ENCODE measurements at regions of chr10 and their contacts with region 1.

Region 1: DNA sequence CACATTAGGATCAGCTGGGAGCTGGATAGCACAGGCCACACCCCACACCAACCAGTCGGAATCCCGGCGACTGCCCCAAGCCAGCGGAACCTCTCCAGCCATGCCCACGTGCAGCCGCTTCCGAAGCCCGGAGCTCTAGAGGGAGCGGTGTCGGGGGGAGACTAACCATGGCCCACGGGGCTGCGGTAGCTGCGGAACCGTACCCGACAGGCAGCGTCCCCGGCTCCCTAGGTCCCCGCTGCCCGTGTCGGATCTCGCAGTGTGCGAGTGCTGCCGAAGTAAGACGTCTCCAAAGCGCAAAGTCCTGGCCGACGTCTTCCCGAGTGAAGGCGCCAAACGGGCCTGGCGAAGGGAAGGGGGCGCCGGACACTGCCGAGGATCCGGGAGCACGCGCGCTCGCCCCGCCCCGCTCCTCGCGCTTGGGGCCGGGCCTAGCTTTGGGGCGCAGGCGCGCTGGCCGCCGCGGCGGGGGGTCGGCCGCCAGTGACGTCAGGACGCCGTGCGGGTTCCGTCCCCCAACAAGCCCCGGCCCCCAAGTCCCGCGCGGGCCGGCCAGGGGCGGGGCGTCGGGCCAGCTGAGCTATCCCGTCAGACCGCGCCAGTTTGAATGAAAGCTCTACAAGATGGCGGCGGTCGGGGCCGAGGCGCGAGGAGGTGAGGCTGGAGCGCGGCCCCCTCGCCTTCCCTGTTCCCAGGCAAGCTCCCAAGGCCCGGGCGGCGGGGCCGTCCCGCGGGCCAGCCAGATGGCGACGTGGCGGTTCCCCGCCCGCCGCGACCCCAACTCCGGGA is at the start of gene SUV39H2:
- DNase-seq: peak; percentile 94
- H3K4me3 Mint-ChIP-seq: peak within 1 kb of the TSS; percentile 94
- H3K27ac Mint-ChIP-seq: peak within 1 kb of the TSS; percentile 81
- H3K4me1 Mint-ChIP-seq: peaks cover 28% of the 10 kb centered on the region
- H3K27me3 Mint-ChIP-seq: no peaks in the 10 kb centered on the region
- total RNA-seq, gene SUV39H2: 35.8 to 38.2 TPM

Region 2: DNA sequence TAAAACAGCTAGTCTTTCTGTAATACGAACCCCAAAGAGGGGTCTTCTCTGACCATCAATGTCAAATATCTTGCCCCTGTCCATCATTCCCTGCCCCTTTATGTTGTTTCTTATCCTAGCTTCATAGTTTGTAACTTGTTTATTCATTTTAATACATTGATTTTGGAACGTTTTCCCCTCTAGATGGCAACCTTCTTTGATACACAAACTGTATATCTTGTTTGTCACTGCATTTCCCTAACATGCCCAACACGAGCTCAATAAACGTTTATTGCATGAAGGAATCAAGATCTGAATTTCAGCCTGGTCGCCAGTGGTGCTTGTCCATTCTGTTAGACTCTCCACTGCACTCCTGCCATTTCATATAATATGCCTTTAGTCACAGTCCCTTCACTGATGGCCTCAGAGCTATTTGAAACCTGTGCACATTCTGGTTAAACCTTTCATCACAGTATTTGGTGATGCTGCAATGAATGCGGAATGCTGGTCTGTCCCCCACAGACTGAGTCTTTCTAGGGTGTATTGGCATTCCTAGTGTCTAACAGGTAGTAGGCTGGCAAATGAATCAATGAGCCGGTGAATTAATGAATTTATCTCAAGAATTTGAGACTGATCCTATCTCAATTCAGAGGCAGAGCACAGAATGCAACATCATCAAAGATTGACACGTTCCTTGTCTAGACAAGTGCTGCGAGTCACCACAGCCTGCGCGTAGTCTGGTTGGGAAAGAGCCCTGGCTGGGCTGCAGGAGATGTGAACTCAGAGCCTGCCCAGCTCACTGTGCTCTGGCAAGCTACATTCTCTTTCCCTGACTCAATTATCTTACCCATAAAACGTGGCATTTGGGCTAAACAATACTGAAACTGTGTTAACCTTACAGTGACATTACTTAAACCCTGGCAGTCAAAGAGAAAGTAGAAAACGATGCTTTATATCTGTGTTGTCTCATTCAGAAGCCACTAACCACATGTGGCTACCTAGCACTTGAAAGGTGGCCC is 492.6 kb before region 1 on chr10:
- CTCF ChIA-PET with region 1: no interaction called
- intact Hi-C with region 1: loop called (anchors 5 kb)
- DNase-seq: peak; percentile 67
- H3K4me3 Mint-ChIP-seq: no peak overlapping the region
- H3K27ac Mint-ChIP-seq: no peak overlapping the region
- H3K4me1 Mint-ChIP-seq: peaks cover 80% of the 10 kb centered on the region
- H3K27me3 Mint-ChIP-seq: peaks cover 3% of the 10 kb centered on the region

Region 3: GRCh38 chr10:14751014-14751896 is 127.2 kb before region 1 on chr10:
- CTCF ChIA-PET with region 1: no interaction called
- intact Hi-C with region 1: no loop called
- DNase-seq: no peak
- H3K4me3 Mint-ChIP-seq: no peak overlapping the region
- H3K27ac Mint-ChIP-seq: no peak overlapping the region
- H3K4me1 Mint-ChIP-seq: peaks cover 2% of the 10 kb centered on the region
- H3K27me3 Mint-ChIP-seq: no peaks in the 10 kb centered on the region

Region 4: DNA sequence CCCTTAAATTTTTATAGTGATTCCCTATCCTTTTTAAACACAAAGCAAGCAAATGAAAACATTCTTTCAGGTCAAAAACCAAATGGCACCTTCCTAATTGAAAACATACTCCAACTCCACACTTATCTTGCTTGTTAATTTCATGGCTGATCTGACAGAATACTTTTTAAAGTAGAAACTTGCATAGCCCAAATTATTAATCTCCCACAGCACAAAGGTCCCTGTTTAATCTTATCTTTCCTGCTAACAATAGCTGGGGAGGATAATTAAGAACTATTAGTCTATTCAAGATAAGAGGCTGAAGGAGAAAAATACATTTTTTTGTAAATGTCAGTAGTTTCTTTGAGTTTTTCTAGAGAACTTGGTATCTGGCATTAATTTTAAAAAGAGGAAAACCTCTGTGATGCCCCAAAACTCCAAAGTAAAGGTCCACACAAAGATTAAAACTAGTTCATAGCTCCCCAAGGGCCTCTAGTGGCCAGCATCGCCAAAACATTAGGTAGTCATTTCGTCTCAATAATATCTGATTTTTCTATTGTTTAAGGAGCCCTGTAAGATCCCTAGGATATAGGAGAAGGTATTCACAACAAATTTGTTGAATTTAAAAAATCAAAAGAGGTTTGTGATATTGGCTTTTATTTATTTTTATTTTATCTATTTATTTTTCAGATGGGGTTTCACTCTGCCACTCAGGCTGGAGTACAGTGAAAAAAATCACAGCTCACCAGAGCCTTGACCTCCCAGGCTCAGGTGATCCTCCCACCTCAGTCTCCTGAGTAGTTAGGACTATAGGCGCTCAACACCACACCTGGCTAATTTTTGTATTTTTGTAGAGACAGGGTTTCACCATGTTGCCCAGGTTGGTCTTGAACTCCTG is 55.3 kb before region 1 on chr10:
- CTCF ChIA-PET with region 1: no interaction called
- intact Hi-C with region 1: no loop called
- DNase-seq: peak; percentile 64
- H3K4me3 Mint-ChIP-seq: no peak overlapping the region
- H3K27ac Mint-ChIP-seq: no peak overlapping the region
- H3K4me1 Mint-ChIP-seq: peaks cover 3% of the 10 kb centered on the region
- H3K27me3 Mint-ChIP-seq: no peaks in the 10 kb centered on the region

Region 5: GRCh38 chr10:14837757-14838581 is 40.5 kb before region 1 on chr10 and contains the starts of genes CDNF, HSPA14 and MSANTD7:
- CTCF ChIA-PET with region 1: interaction called, 3 read pairs
- intact Hi-C with region 1: loop called (anchors 1 kb)
- DNase-seq: peak; percentile 99
- H3K4me3 Mint-ChIP-seq: peak within 1 kb of the TSS; percentile 92
- H3K27ac Mint-ChIP-seq: peak within 1 kb of the TSS; percentile 93
- H3K4me1 Mint-ChIP-seq: peaks cover 22% of the 10 kb centered on the region
- H3K27me3 Mint-ChIP-seq: no peaks in the 10 kb centered on the region
- total RNA-seq, gene CDNF: 1.6 to 1.8 TPM
- total RNA-seq, gene HSPA14: 28.1 to 29.9 TPM
- total RNA-seq, gene MSANTD7: 19.6 to 21.3 TPM

Region 6: DNA sequence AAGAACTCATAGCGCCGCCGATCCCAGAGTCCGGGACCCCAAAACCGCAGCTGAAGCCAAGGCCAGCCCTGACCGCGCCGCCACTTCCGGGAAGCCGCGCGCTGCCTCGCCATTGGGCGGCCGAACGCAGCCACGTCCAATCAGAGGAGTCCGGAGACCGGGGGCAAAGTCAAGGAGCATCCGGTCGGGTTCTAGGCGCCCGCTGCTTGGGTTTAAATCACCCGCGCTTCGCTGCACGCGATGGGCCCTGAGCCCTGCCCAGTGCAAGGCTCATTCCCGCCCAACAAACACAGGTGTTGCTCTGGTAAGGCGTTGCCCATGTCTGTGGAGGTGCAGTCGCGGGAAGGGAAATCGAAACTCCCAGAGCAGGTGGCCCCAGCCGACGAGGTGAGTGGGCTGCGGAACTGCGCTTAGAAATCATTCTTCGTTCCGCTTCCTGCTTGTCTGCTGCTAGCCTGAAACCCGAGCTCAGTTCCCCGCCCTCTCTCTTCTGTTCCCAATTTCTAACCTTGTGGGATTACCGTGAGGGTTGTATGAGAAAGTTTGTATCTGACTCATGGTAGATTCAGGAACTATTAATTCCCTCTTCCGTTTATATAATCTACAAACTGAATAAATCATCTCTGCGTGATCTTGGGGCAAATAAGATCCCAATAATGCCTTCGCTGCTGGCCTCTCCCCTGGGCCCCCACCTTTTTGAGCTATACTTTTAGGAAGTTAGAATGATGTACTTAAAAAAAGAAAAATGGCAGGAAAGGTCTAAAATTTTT is 75.7 kb after region 1 on chr10 and contains the start of gene DCLRE1C:
- CTCF ChIA-PET with region 1: no interaction called
- intact Hi-C with region 1: loop called (anchors 1 kb)
- DNase-seq: peak; percentile 91
- H3K4me3 Mint-ChIP-seq: peak within 1 kb of the TSS; percentile 90
- H3K27ac Mint-ChIP-seq: peak within 1 kb of the TSS; percentile 93
- H3K4me1 Mint-ChIP-seq: peaks cover 54% of the 10 kb centered on the region
- H3K27me3 Mint-ChIP-seq: no peaks in the 10 kb centered on the region
- total RNA-seq, gene DCLRE1C: 9.8 to 13.9 TPM

Region 7: GRCh38 chr10:14971867-14972448 is 93.5 kb after region 1 on chr10:
- CTCF ChIA-PET with region 1: interaction called, 12 read pairs
- intact Hi-C with region 1: no loop called
- DNase-seq: peak; percentile 70
- H3K4me3 Mint-ChIP-seq: no peak overlapping the region
- H3K27ac Mint-ChIP-seq: no peak overlapping the region
- H3K4me1 Mint-ChIP-seq: no peaks in the 10 kb centered on the region
- H3K27me3 Mint-ChIP-seq: peaks cover 11% of the 10 kb centered on the region

Measured in activated naive CD4-positive, alpha-beta T cell treated with anti-CD3 and anti-CD28 coated beads for 36 hours (primary cell).